ENCODE measurements at regions of chr9 and their contacts with region 1.

Region 1: GRCh38 chr9:6353851-6354686 is 25.9 kb downstream of the TPD52L3 start:
- DNase-seq: peak; percentile 45
- ATAC-seq: peak; percentile 95
- H3K4me3 ChIP-seq: no peak overlapping the region
- H3K27ac ChIP-seq: no peak overlapping the region
- H3K4me1 ChIP-seq: peaks cover 15% of the 10 kb centered on the region
- H3K27me3 ChIP-seq: no peaks in the 10 kb centered on the region
- CTCF ChIP-seq: peak; percentile 68 to 74 (median 74); a peak in 5 of 6 replicates
- EP300 ChIP-seq: no peak
- POLR2A ChIP-seq: no peak
- RAD21 ChIP-seq: peak; percentile 85

Region 2: GRCh38 chr9:5364294-5365024 is 989.6 kb before region 1 on chr9:
- CTCF ChIA-PET with region 1: no interaction called
- POLR2A ChIA-PET with region 1: no interaction called
- RAD21 ChIA-PET with region 1: no interaction called
- SMC1A ChIA-PET with region 1: no interaction called
- in situ Hi-C with region 1: no loop called
- intact Hi-C with region 1: no loop called
- DNase-seq: peak; percentile 51
- ATAC-seq: peak; percentile 96
- H3K4me3 ChIP-seq: no peak overlapping the region
- H3K27ac ChIP-seq: peak overlapping the region; percentile 44
- H3K4me1 ChIP-seq: peaks cover 15% of the 10 kb centered on the region
- H3K27me3 ChIP-seq: no peaks in the 10 kb centered on the region
- CTCF ChIP-seq: no peak
- EP300 ChIP-seq: peak; percentile 63 to 72; a peak in 3 of 4 replicates
- POLR2A ChIP-seq: no peak
- RAD21 ChIP-seq: no peak

Region 3: GRCh38 chr9:5671711-5672353 is 682.2 kb before region 1 on chr9:
- CTCF ChIA-PET with region 1: no interaction called
- POLR2A ChIA-PET with region 1: no interaction called
- RAD21 ChIA-PET with region 1: no interaction called
- SMC1A ChIA-PET with region 1: no interaction called
- in situ Hi-C with region 1: no loop called
- intact Hi-C with region 1: no loop called
- DNase-seq: peak; percentile 17
- ATAC-seq: peak; percentile 87
- H3K4me3 ChIP-seq: no peak overlapping the region
- H3K27ac ChIP-seq: no peak overlapping the region
- H3K4me1 ChIP-seq: no peaks in the 10 kb centered on the region
- H3K27me3 ChIP-seq: no peaks in the 10 kb centered on the region
- CTCF ChIP-seq: no peak
- EP300 ChIP-seq: no peak
- POLR2A ChIP-seq: no peak
- RAD21 ChIP-seq: no peak

Region 4: GRCh38 chr9:6367128-6367890 is 13.2 kb after region 1 on chr9:
- CTCF ChIA-PET with region 1: interaction called, 9 read pairs
- POLR2A ChIA-PET with region 1: no interaction called
- RAD21 ChIA-PET with region 1: interaction called, 3 read pairs
- SMC1A ChIA-PET with region 1: interaction called, 17 read pairs
- in situ Hi-C with region 1: no loop called
- intact Hi-C with region 1: no loop called
- DNase-seq: no peak
- ATAC-seq: no peak
- H3K4me3 ChIP-seq: no peak overlapping the region
- H3K27ac ChIP-seq: no peak overlapping the region
- H3K4me1 ChIP-seq: no peaks in the 10 kb centered on the region
- H3K27me3 ChIP-seq: no peaks in the 10 kb centered on the region
- CTCF ChIP-seq: no peak
- EP300 ChIP-seq: no peak
- POLR2A ChIP-seq: no peak
- RAD21 ChIP-seq: no peak

Region 5: DNA sequence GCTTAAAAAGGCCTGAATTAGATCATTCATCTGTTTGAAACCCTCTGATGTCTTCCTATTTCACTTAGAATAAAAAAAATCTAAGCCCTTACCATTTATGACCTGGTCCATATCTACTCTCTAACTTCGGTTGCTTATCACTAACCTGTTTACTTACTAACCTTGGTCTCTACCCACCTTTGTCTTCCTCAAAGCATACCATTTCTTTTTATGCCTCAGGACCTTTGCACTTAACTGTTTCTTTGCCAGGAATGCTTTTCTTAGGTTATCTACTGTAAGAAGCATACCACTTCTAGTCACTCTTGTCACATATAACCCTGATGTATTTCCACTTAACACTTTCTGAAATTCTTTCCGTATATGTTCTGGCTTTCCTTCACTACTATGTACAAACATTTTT is 125.9 kb after region 1 on chr9:
- CTCF ChIA-PET with region 1: interaction called, 4 read pairs
- POLR2A ChIA-PET with region 1: no interaction called
- RAD21 ChIA-PET with region 1: interaction called, 8 read pairs
- SMC1A ChIA-PET with region 1: interaction called, 3 read pairs
- in situ Hi-C with region 1: no loop called
- intact Hi-C with region 1: loop called (anchors 5 kb)
- DNase-seq: no peak
- ATAC-seq: no peak
- H3K4me3 ChIP-seq: no peak overlapping the region
- H3K27ac ChIP-seq: no peak overlapping the region
- H3K4me1 ChIP-seq: no peaks in the 10 kb centered on the region
- H3K27me3 ChIP-seq: no peaks in the 10 kb centered on the region
- CTCF ChIP-seq: no peak
- EP300 ChIP-seq: no peak
- POLR2A ChIP-seq: no peak
- RAD21 ChIP-seq: no peak

Region 6: DNA sequence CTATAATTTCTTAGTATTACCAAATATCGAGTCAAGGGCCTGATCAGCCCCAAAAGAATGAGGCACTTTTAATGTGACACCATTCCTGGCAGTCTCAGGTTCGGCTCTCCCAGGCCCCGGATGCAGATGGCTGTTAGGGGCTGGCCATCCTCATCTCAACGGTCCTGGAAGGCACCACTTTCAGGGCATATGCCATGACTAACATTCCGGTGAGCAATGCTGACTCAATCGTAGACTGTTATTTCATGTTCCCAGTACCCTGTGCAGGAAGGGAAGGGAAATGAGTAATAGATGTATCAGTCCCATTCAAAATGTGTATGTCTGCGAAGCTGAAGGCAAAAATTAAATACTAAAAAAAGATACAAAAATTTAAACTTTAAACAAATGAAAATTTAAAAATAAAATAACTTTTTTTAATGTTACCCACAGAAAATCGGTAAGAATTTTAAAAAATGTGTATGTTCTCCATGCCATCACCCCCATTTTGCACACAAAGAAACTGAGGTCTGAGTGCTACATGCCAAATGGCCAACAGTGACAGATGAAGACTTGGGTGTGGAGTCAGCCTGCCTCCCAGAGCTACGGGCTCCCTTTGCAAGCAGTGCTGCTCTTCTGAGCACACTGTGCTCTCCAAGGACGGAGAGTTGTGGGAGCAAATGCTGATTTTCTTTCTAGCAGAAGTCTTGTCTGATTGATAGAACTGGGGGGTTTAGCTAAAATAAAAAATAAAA is 212.5 kb after region 1 on chr9:
- CTCF ChIA-PET with region 1: interaction called, 123 read pairs
- POLR2A ChIA-PET with region 1: interaction called, 4 read pairs
- RAD21 ChIA-PET with region 1: interaction called, 41 read pairs
- SMC1A ChIA-PET with region 1: interaction called, 84 read pairs
- in situ Hi-C with region 1: loop called (anchors 5 kb)
- intact Hi-C with region 1: loop called (anchors 1 kb)
- DNase-seq: no peak
- ATAC-seq: peak; percentile 59
- H3K4me3 ChIP-seq: no peak overlapping the region
- H3K27ac ChIP-seq: no peak overlapping the region
- H3K4me1 ChIP-seq: no peaks in the 10 kb centered on the region
- H3K27me3 ChIP-seq: no peaks in the 10 kb centered on the region
- CTCF ChIP-seq: no peak
- EP300 ChIP-seq: no peak
- POLR2A ChIP-seq: no peak
- RAD21 ChIP-seq: no peak

Region 7: GRCh38 chr9:6584881-6585597 is 231.0 kb after region 1 on chr9:
- CTCF ChIA-PET with region 1: interaction called, 14 read pairs
- POLR2A ChIA-PET with region 1: no interaction called
- RAD21 ChIA-PET with region 1: interaction called, 5 read pairs
- SMC1A ChIA-PET with region 1: interaction called, 7 read pairs
- in situ Hi-C with region 1: no loop called
- intact Hi-C with region 1: no loop called
- DNase-seq: no peak
- ATAC-seq: peak; percentile 85
- H3K4me3 ChIP-seq: no peak overlapping the region
- H3K27ac ChIP-seq: no peak overlapping the region
- H3K4me1 ChIP-seq: no peaks in the 10 kb centered on the region
- H3K27me3 ChIP-seq: no peaks in the 10 kb centered on the region
- CTCF ChIP-seq: peak in 2 of 3 experiments; percentile 13 to 35; a peak in 3 of 6 replicates
- EP300 ChIP-seq: no peak
- POLR2A ChIP-seq: no peak
- RAD21 ChIP-seq: peak; percentile 42; the same call in 1 of the 2 replicates